ENCODE measurements at regions of chr18 and their contacts with region 1.

Region 1: DNA sequence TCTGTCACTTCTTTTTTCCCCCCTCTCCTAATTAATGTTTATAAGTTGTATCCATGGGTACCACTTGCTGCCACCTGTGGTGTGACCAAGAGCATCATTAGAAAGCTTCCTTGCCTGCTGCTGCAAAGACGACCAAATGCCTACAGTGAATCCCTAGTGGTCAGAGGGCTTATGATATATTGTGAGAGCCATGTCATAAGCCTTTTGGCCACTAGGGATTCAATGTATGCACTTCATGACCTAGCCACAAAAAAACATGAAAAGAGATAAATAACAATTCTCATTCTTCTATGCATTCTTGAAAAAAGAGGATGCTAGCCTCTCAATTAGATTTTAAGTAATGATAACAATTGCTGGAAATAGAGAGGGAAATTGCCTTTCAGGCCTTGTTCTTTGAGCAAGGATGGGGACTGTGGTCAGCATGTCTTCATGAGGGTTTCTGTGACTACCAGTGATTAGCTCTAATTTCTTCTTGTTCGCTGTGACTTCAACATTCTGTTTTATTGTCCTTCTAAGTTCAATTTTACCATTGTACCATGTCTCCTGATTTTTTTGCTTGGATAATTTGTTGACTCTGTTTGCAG is 435.3 kb downstream of the TGIF1 start:
- DNase-seq: no peak
- H3K4me3 ChIP-seq: no peak overlapping the region
- H3K27ac ChIP-seq: no peak overlapping the region
- H3K4me1 ChIP-seq: peaks cover 16% of the 10 kb centered on the region
- H3K27me3 ChIP-seq: no peaks in the 10 kb centered on the region
- CTCF ChIP-seq: peak; percentile 24 to 46

Region 2: DNA sequence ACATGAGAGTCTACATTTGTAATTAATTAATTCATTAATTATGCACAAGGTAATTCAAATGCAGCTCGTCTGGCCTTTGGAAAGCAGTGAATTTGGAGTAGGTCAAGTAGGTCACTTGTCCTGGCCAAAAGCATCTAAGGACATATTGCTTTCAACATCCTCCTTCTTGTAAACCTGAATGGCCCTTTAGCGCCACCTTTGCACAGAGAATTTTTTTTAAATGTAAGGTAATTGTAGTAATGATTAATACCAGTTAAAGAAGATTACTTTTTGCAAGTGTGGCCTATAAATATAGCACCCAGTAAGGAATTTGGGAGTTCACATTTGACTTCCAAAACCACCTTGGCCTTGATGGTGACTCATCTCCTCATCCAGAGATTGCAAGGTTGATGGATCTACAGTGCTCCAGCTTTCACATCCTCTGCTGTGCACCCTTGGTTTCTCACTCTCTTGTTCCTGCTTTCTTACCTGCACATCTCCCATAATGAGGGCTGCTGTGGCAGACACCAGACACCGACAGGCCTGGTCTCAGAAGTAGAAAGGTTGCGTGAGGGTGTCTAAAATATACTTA is 46.3 kb after region 1 on chr18:
- CTCF ChIA-PET with region 1: no interaction called
- dilution Hi-C with region 1: loop called (anchors 5 kb)
- in situ Hi-C with region 1: no loop called
- intact Hi-C with region 1: no loop called
- DNase-seq: peak; percentile 61
- H3K4me3 ChIP-seq: no peak overlapping the region
- H3K27ac ChIP-seq: no peak overlapping the region
- H3K4me1 ChIP-seq: peaks cover 18% of the 10 kb centered on the region
- H3K27me3 ChIP-seq: no peaks in the 10 kb centered on the region
- CTCF ChIP-seq: no peak

Measured in mammary epithelial cell (primary cell).